Dendritic cell treated with granulocyte-macrophage colony-stimulating factor and Interleukin-4, amounts not matched to agents 40 ng/mL and 50 ng/mL, for 4 days (primary cell): ENCODE measurements at regions of chr11 and their contacts with region 1.

Region 1: DNA sequence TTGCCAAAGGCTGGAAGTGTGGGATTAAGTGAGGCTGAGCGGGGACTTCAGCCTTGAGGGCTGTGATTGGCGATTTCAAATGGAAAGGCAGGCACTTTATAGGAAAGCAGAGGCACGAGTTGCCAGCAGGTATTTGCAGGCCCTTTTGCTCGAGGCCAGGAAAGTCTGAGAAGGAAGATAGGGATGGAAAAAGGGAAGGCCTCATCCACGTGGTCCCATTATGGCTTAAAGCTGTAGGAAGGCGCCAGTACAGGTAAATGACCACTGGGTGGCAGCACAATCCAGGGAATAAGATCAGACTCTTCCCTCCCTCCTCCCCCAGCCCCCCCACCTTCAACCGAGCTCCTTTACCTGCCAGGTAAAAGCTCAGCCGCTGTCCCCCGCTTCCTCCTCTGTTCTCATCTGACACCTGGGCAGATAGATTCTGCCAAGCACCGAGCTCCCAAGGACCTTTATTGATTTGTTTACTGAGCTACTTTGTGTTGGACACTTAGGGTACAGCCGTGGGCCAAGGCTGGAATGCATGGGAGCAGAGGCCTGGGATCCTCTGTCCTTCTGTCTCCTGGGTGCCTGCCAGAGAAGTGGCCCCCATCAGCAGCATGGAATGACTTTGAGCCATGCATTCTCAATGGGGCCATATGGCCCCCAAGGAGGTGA is 7.5 kb downstream of the P2RX3 start:
- H3K4me3 Mint-ChIP-seq: no peak overlapping the region
- H3K27ac Mint-ChIP-seq: no peak overlapping the region
- H3K4me1 Mint-ChIP-seq: peaks cover 8% of the 10 kb centered on the region
- H3K27me3 Mint-ChIP-seq: peaks cover 10% of the 10 kb centered on the region

Region 2: DNA sequence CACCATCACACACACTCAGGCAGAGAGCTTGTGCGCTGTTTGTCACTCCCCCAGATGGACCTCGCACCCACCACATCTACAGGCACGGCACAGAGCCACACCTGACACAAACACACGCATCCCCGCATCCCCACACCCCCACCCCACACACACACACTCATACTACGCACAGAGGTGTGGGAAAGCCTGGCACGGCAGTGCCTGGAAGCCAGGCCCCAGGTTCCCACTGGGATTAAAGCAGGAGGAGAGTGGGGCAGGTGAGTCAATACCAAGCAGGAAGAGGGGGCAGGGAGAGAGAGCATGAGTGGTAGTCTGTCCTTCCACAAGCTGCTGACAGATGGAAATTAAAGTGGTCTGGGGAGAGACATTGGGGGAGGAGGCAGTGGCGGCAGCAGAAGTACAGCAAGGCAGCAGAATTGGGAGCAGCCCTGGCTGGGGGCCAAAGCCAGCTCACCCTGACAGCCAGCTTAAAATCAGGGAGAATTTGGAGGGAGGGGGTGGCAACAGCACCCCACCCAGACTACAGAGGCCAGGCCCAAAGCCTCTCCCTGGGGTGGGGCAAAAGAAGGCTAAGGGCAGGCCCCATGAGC is 41.6 kb before region 1 on chr11:
- intact Hi-C with region 1: no loop called
- H3K4me3 Mint-ChIP-seq: no peak overlapping the region
- H3K27ac Mint-ChIP-seq: peak overlapping the region; percentile 4
- H3K4me1 Mint-ChIP-seq: peaks cover 37% of the 10 kb centered on the region
- H3K27me3 Mint-ChIP-seq: peaks cover 4% of the 10 kb centered on the region

Region 3: GRCh38 chr11:57456960-57457642 is 111.4 kb after region 1 on chr11:
- intact Hi-C with region 1: loop called (anchors 5 kb)
- H3K4me3 Mint-ChIP-seq: no peak overlapping the region
- H3K27ac Mint-ChIP-seq: no peak overlapping the region
- H3K4me1 Mint-ChIP-seq: peaks cover 31% of the 10 kb centered on the region
- H3K27me3 Mint-ChIP-seq: peaks cover 43% of the 10 kb centered on the region

Region 4: GRCh38 chr11:57480409-57481137 is 134.9 kb after region 1 on chr11:
- intact Hi-C with region 1: loop called (anchors 5 kb)
- H3K4me3 Mint-ChIP-seq: no peak overlapping the region
- H3K27ac Mint-ChIP-seq: no peak overlapping the region
- H3K4me1 Mint-ChIP-seq: peaks cover 64% of the 10 kb centered on the region
- H3K27me3 Mint-ChIP-seq: peaks cover 57% of the 10 kb centered on the region